WTC11 (cell line): ENCODE measurements at regions of chr5 and their contacts with region 1.

Region 1: DNA sequence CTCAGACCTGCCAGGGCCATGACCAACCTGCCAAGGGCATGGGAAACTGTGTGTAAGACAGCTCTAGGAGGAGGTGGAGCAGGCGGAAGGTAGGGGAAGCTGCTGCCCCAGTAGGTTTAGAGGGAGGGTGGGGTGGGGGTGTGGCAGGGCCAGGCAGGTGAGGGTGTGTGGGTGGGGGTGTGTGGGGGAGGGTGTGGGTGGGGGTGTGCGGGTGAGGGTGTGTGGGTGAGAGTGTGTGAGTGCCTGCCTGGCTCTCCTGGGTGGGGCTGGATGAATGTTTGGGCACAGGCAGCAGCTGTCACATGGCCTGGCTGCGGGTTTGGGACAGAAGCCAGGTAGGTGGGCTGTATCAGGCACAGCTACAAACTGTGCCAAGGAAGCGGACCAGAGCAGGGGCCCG is 8.8 kb upstream of the N4BP3 start:
- DNase-seq: no peak
- ATAC-seq: no peak
- H3K4me3 Mint-ChIP-seq: no peak overlapping the region
- H3K27ac Mint-ChIP-seq: no peak overlapping the region
- H3K4me1 Mint-ChIP-seq: peaks cover 15% of the 10 kb centered on the region
- H3K27me3 Mint-ChIP-seq: no peaks in the 10 kb centered on the region; the same call in 1 of the 2 replicates
- CTCF ChIP-seq: no peak

Region 2: GRCh38 chr5:177997307-177997670 is 107.2 kb before region 1 on chr5:
- CTCF ChIA-PET with region 1: no interaction called
- POLR2A ChIA-PET with region 1: interaction called, 10 read pairs
- DNase-seq: no peak
- ATAC-seq: no peak
- H3K4me3 Mint-ChIP-seq: no peak overlapping the region
- H3K27ac Mint-ChIP-seq: no peak overlapping the region
- H3K4me1 Mint-ChIP-seq: peaks cover 13% of the 10 kb centered on the region
- H3K27me3 Mint-ChIP-seq: peaks cover 7% of the 10 kb centered on the region
- CTCF ChIP-seq: no peak

Region 3: DNA sequence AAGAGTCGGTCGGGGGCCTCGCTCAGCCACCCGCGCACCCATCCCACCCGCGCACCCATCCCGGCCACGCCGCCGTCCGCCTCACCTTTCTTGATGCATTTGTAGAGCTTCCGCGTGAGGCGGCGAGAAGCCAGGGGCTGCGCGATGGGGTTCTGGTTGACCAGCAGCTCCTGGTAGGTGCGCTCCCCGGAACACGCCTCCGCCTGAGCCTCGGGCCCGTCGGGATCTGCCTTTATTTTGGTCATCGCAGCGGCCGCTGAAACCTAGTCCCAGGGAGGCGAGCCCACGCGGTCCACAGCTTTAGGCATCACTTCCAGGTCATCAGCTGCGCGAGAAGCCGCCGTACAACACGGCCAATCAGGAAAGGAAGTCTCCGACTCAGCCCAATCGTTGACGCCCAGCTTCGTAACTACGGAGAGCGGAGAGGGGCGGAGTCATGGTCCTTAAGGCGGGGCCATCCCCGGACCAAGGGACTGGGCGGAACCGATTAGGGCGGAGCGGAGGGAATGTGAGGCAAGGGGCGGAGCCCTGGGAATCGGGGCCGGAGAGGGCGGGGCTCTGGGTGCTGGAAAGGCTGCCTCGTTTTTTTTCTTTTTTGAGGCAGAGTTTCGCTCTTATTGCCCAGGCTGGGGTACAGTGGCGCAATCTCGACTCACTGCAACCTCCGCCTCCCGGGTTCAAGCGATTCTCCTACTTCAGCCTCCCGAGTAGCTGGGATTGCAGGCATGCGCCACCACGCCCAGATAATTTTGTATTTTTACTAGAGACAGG is 49.3 kb after region 1 on chr5 and contains the start of gene NHP2:
- CTCF ChIA-PET with region 1: no interaction called
- POLR2A ChIA-PET with region 1: no interaction called
- DNase-seq: peak; percentile 99
- ATAC-seq: peak; percentile 96
- H3K4me3 Mint-ChIP-seq: peak within 1 kb of the TSS; percentile 94
- H3K27ac Mint-ChIP-seq: peak within 1 kb of the TSS; percentile 94
- H3K4me1 Mint-ChIP-seq: peaks cover 13% of the 10 kb centered on the region
- H3K27me3 Mint-ChIP-seq: no peaks in the 10 kb centered on the region
- CTCF ChIP-seq: no peak
- total RNA-seq, gene NHP2: 263 to 269 TPM (median 264 TPM) in 3 replicates